ENCODE measurements at regions of chr9 and their contacts with region 1.

Region 1: DNA sequence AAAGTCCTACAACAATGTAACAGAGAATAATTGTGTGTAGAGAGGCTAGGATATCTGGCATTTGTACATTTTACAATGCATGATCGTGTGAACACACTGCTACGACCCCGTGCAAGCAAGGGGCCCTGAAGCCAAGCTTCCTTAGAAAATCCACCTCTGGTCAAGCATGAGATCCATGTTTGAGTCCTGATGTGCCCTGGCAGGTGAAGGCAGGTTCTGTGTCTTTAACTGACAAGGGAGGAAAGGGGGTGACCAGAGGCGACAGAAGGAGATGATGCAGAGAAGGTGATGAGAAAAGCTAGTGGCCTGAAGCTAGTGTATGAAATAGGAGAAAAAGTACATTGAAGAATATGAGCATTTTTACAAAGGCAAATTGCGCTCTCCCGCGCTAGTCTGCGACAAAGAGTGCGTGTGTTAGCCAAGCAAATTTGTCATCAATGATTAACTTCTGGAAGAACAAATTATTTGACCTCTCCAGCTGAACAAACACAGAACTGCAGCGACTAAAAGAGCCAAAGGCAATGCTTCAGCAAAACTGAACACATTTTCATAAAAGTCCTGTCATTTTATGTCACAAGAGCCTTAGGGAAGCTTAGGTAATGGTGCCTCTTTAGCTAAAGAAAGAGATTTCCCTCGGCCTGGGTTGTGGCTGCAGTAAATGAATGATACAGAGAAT is 101.7 kb upstream of the DAPK1 start:
- DNase-seq: peak; percentile 66 to 69
- H3K4me3 ChIP-seq: no peak overlapping the region
- H3K4me3 Mint-ChIP-seq: peak overlapping the region; percentile 45
- H3K27ac Mint-ChIP-seq: peak overlapping the region; percentile 69
- H3K4me1 ChIP-seq: peaks cover 20% of the 10 kb centered on the region
- H3K4me1 Mint-ChIP-seq: peaks cover 8% of the 10 kb centered on the region
- H3K27me3 ChIP-seq: no peaks in the 10 kb centered on the region
- H3K27me3 Mint-ChIP-seq: no peaks in the 10 kb centered on the region
- CTCF ChIP-seq: no peak

Region 2: GRCh38 chr9:87119328-87119881 is 276.5 kb before region 1 on chr9:
- CTCF ChIA-PET with region 1: no interaction called
- POLR2A ChIA-PET with region 1: no interaction called
- intact Hi-C with region 1: no loop called
- DNase-seq: no peak
- H3K4me3 ChIP-seq: no peak overlapping the region
- H3K4me3 Mint-ChIP-seq: no peak overlapping the region
- H3K27ac Mint-ChIP-seq: no peak overlapping the region
- H3K4me1 ChIP-seq: no peaks in the 10 kb centered on the region
- H3K4me1 Mint-ChIP-seq: no peaks in the 10 kb centered on the region
- H3K27me3 ChIP-seq: no peaks in the 10 kb centered on the region
- H3K27me3 Mint-ChIP-seq: peaks cover 6% of the 10 kb centered on the region
- CTCF ChIP-seq: no peak

Region 3: GRCh38 chr9:87497604-87498045 is 101.7 kb after region 1 on chr9 and contains the start of gene DAPK1:
- CTCF ChIA-PET with region 1: no interaction called
- POLR2A ChIA-PET with region 1: interaction called, 7 read pairs
- intact Hi-C with region 1: loop called (anchors 2 kb)
- DNase-seq: peak; percentile 68 to 73
- H3K4me3 ChIP-seq: peak within 1 kb of the TSS; percentile 70
- H3K4me3 Mint-ChIP-seq: peak within 1 kb of the TSS; percentile 78
- H3K27ac Mint-ChIP-seq: peak within 1 kb of the TSS; percentile 73
- H3K4me1 ChIP-seq: peaks cover 6% of the 10 kb centered on the region; the same call in 1 of the 2 replicates
- H3K4me1 Mint-ChIP-seq: peaks cover 11% of the 10 kb centered on the region
- H3K27me3 ChIP-seq: no peaks in the 10 kb centered on the region
- H3K27me3 Mint-ChIP-seq: no peaks in the 10 kb centered on the region
- CTCF ChIP-seq: peak; percentile 13 to 18
- total RNA-seq, gene DAPK1: 65.8 and 79.2 TPM in 2 replicates

Measured in Caco-2 (cell line).